MCF 10A (cell line): ENCODE measurements at regions of chr12 and their contacts with region 1.

Region 1: DNA sequence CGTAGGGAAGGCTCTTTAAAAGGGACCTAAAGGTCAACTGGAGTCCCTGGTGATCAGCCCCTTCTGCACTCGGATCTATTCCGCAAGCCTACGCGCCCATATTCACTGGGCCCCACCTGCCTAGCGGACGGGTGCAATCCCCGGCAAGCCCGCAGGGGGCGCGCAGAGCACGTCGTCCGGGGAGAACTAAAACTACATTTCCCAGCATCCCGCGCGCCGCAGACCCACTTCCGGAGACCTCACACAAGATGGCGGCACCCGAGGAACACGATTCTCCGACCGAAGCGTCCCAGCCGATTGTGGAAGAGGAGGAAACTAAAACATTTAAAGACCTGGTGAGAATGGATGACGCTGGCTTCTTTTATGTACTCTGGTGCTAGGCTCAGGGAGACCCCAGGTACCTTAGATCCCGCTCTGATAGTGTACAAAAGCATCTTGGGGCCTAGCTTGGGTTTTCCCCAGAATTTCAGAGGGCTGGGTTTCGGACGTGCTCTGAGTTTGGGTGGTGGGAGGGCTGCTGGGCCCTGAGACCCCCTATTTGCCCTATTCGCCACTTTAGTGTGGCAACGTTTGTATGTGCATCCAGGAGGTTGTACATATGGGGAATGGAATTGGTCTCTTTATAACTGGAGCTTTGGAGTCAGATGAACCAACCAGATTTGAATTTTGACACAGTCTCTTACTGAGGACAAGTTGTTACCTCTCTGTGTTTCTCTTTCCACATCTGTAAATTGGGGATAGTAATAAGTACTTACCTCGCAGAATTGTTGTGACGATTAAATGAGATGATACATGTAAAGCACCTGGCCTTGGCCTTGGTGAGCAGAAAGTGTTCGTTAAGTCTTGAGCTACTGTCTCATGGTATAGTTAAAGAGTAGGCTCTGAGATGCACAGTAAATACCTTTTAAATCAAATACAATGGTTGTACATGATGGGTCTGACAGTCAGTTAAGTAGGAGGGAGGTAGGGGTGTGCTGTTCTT is at the start of gene DDX47:
- DNase-seq: peak; percentile 92
- H3K4me3 Mint-ChIP-seq: peak within 1 kb of the TSS; percentile 99
- H3K27ac Mint-ChIP-seq: peak within 1 kb of the TSS; percentile 99
- H3K4me1 Mint-ChIP-seq: peaks cover 27% of the 10 kb centered on the region
- H3K27me3 Mint-ChIP-seq: no peaks in the 10 kb centered on the region
- CTCF ChIP-seq: peak; percentile 90
- total RNA-seq, gene DDX47: 47.0 and 47.7 TPM in 2 replicates

Region 2: DNA sequence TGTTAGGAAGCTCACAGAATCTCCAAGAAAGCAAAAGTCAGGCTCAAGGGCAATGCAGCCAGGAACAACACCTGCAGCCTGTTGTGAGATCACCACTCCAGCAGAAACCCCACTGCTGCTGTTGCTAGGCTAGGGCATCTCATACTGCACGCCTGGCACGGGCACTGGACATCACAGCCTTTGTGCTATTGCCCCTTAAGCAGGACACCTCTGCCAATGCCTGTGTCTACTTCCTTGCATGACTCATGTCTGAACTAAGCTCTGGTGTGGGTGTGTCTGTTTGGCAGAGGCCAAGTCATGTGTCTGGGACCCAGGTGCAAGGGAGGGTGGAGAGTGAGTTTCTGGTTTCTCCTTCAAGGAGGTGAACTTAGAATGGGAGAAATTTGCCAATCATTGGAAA is 10.2 kb before region 1 on chr12:
- CTCF ChIA-PET with region 1: interaction called, 11 read pairs
- POLR2A ChIA-PET with region 1: interaction called, 31 read pairs
- intact Hi-C with region 1: no loop called
- DNase-seq: peak; percentile 99
- H3K4me3 Mint-ChIP-seq: peak overlapping the region; percentile 11
- H3K27ac Mint-ChIP-seq: peak overlapping the region; percentile 67
- H3K4me1 Mint-ChIP-seq: peaks cover 48% of the 10 kb centered on the region
- H3K27me3 Mint-ChIP-seq: no peaks in the 10 kb centered on the region
- CTCF ChIP-seq: no peak

Region 3: DNA sequence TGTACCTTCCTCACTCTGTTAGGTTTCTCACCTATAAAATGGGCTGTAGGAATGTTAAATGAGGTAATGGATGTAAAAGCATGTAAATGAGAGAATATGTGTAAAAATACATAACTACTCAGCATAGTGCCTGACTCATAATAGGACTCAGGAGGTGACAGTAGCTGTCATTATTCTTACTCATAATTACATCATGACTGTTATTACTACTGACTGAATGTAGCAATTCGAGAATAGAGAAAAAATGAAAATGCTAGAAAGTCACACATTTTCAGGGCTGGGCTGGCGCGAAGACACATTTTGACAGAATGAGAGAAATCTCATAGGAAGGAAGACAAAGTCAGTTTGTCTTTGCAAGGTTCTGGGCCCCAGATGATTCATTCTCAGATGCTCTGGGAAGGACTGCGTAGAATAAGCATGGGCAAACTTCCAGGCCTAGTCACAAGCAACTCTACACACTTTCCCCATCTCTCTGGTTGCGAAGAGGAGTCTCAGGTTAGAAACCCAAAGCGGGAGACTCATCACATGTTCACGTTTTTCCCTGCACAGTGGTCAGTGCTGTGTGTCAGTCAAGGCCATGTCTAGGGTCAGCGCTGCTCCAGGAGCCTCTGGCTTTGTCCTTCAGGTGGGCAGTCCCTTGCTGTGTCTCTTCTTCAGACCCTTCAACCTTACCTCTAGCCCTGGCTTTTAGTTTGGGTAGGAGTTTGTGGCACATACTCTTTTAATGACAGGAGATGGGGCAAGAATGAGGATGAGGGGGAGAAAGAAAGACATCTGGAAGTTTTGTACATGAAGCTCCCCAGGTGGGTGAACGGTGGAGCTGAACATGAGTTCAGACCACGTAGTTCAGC is 86.3 kb after region 1 on chr12:
- CTCF ChIA-PET with region 1: interaction called, 8 read pairs
- POLR2A ChIA-PET with region 1: interaction called, 17 read pairs
- intact Hi-C with region 1: no loop called
- DNase-seq: peak; percentile 93
- H3K4me3 Mint-ChIP-seq: peak overlapping the region; percentile 68
- H3K27ac Mint-ChIP-seq: peak overlapping the region; percentile 86
- H3K4me1 Mint-ChIP-seq: peaks cover 50% of the 10 kb centered on the region
- H3K27me3 Mint-ChIP-seq: no peaks in the 10 kb centered on the region
- CTCF ChIP-seq: no peak

Region 4: GRCh38 chr12:12964255-12964654 is 150.8 kb after region 1 on chr12:
- CTCF ChIA-PET with region 1: no interaction called
- POLR2A ChIA-PET with region 1: no interaction called
- intact Hi-C with region 1: no loop called
- DNase-seq: peak; percentile 11
- H3K4me3 Mint-ChIP-seq: no peak overlapping the region
- H3K27ac Mint-ChIP-seq: no peak overlapping the region
- H3K4me1 Mint-ChIP-seq: no peaks in the 10 kb centered on the region
- H3K27me3 Mint-ChIP-seq: no peaks in the 10 kb centered on the region
- CTCF ChIP-seq: no peak

Region 5: DNA sequence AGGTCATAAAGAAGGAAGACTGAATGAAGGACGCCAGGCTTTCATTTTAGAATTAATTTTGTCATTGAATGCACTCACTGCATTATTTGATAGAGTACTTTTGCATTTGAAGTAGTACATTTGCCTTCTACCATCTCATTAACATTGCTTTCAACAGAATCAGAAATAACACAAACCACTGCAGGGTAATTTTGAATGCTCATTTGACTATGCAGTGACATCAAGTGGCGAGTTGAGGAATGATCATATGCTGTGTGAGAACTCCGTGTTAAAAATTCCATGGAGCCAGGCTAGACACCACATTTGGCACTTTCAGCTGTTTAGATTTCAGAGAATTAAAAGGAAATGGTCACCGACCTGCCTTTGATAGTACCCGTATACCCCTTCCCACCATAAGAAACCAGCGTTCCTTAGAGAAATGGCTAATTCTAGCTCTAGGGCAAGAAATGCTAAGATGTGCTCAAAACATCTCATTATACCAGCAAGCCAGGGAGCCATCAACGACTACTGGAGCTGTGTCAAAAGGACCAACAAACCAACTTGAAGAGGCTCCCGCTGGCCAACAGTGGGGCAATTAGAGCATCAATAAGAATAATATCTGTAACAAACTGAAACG is 170.1 kb after region 1 on chr12:
- CTCF ChIA-PET with region 1: interaction called, 14 read pairs
- POLR2A ChIA-PET with region 1: no interaction called
- intact Hi-C with region 1: no loop called
- DNase-seq: peak; percentile 65
- H3K4me3 Mint-ChIP-seq: no peak overlapping the region
- H3K27ac Mint-ChIP-seq: peak overlapping the region; percentile 0
- H3K4me1 Mint-ChIP-seq: peaks cover 6% of the 10 kb centered on the region
- H3K27me3 Mint-ChIP-seq: no peaks in the 10 kb centered on the region
- CTCF ChIP-seq: peak; percentile 66